ENCODE measurements at regions of chr16 and their contacts with region 1.

Region 1: DNA sequence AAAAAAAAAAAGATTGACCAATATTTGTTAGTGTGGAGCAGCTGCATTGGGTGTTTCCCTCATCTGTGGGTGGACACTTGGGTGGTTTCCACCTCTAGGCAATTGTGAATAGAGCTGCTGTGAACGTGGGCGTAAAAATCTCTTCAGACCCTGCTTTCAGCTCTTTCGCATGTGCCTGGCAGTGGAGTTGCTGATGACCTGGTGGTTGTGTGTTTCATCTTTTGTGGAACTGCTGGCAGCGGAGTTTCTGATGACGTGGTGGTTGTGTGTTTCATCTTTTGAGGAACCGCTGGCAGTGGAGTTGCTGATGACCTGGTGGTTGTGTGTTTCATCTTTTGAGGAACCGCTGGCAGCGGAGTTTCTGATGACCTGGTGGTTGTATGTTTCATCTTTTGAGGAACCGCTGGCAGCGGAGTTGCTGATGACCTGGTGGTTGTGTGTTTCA is 21.4 kb downstream of the ZC3H18 start:
- DNase-seq: peak in 1 of 2 donors; percentile 25
- H3K4me3 ChIP-seq: no peak overlapping the region
- H3K27ac ChIP-seq: no peak overlapping the region
- H3K4me1 ChIP-seq: no peaks in the 10 kb centered on the region
- H3K27me3 ChIP-seq: no peaks in the 10 kb centered on the region
- CTCF ChIP-seq: no peak
- POLR2A ChIP-seq: no peak

Region 2: GRCh38 chr16:88468275-88469141 is 123.1 kb before region 1 on chr16:
- intact Hi-C with region 1: no loop called
- DNase-seq: no peak
- H3K4me3 ChIP-seq: no peak overlapping the region
- H3K27ac ChIP-seq: no peak overlapping the region
- H3K4me1 ChIP-seq: no peaks in the 10 kb centered on the region
- H3K27me3 ChIP-seq: no peaks in the 10 kb centered on the region
- CTCF ChIP-seq: no peak
- POLR2A ChIP-seq: no peak

Region 3: GRCh38 chr16:88556294-88556988 is 35.2 kb before region 1 on chr16:
- intact Hi-C with region 1: loop called (anchors 1 kb)
- DNase-seq: no peak
- H3K4me3 ChIP-seq: no peak overlapping the region
- H3K27ac ChIP-seq: no peak overlapping the region
- H3K4me1 ChIP-seq: no peaks in the 10 kb centered on the region
- H3K27me3 ChIP-seq: peaks cover 0 to 41% of the 10 kb centered on the region in 2 donors
- CTCF ChIP-seq: no peak
- POLR2A ChIP-seq: no peak

Region 4: DNA sequence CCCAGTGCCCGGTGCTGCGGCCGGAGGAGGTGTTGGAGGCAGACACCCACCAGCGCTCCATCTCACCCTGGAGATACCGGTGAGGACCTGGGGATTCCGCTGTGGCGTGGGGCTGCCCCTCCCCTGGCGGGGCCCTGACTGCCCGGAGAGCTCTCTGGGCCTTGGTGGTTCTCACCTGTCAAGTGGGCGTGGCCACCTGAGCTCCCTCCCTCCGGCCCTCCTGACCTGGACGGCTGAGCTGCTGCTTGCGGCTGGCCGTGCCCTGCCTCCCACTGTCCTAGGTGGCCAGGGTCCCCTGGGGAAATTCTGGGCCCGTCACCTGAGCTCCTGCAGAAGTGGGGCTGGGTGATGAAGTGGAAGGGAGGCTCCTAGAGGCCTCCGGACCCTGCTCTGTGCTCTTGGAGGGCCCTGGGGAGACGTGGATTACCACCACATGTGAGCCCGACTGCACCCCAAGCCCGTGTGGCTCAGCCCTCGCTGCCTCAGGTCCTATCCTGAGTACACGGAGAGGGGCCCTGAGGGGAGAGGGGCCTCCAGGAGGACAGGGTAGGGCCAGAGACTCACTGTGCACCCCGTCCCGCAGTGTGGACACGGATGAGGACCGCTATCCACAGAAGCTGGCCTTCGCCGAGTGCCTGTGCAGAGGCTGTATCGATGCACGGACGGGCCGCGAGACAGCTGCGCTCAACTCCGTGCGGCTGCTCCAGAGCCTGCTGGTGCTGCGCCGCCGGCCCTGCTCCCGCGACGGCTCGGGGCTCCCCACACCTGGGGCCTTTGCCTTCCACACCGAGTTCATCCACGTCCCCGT is 47.8 kb after region 1 on chr16:
- intact Hi-C with region 1: no loop called
- DNase-seq: no peak
- H3K4me3 ChIP-seq: peak overlapping the region in 1 of 3 donors; percentile 19
- H3K27ac ChIP-seq: no peak overlapping the region
- H3K4me1 ChIP-seq: peaks cover 0 to 14% of the 10 kb centered on the region in 2 donors
- H3K27me3 ChIP-seq: peaks cover 2 to 45% of the 10 kb centered on the region in 2 donors
- CTCF ChIP-seq: no peak
- POLR2A ChIP-seq: no peak

Measured in breast epithelium (tissue), 4 donors.